Adrenal gland (tissue), 19 donors: ENCODE measurements at regions of chr11 and their contacts with region 1.

Region 1: GRCh38 chr11:112588252-112588694 is 327.6 kb upstream of the PLET1 start:
- DNase-seq: peak; percentile 56 to 92 (median 77)
- H3K4me3 ChIP-seq: no peak overlapping the region
- H3K27ac ChIP-seq: no peak overlapping the region
- H3K4me1 ChIP-seq: no peaks in the 10 kb centered on the region
- H3K27me3 ChIP-seq: no peaks in the 10 kb centered on the region
- CTCF ChIP-seq: peak; percentile 61 to 85 (median 72)
- POLR2A ChIP-seq: no peak

Region 2: DNA sequence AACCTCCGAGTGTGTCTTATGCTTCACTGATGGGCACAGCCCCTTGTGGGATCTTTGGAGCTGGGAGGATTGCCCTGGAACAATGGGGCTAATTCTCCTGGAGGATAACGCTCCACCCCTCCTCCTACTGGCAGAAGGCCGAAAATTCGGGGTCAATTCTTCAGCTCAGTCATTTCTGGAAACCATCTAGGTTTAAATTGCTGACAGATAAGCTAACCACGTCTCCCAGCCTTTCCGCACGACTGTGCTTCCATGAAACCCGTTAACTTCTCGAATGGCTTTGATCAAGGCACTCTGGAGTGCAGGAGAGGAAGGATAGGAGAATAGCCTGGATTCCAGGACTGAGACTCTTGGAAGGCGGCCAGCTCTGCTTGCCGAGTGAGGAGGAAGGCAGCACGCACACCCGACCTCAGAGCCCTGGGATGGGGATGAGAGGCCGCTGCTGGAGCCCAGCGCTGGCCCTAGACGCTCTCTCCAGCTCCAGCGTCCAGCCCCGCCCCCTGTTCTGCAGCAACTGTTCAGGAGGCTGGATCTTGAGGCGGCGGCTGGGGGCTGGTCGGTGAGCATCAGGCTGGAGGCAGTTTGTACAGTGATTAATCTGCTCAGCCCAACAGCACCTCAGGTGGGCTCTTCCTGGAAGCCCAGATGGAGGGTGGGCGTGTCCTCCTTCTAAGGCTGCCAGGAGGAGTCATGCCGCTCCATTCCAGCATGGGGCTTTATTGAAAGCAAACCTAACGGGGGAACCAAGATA is 196.2 kb after region 1 on chr11:
- intact Hi-C with region 1: loop called in 1 of 2 experiments (anchors 10 kb)
- DNase-seq: peak in 5 of 7 donors; percentile 56 to 71 (median 62)
- H3K4me3 ChIP-seq: peak overlapping the region in 1 of 4 donors; percentile 15
- H3K27ac ChIP-seq: no peak overlapping the region
- H3K4me1 ChIP-seq: peaks cover 0 to 15% of the 10 kb centered on the region in 2 donors
- H3K27me3 ChIP-seq: no peaks in the 10 kb centered on the region
- CTCF ChIP-seq: no peak
- POLR2A ChIP-seq: no peak

Region 3: DNA sequence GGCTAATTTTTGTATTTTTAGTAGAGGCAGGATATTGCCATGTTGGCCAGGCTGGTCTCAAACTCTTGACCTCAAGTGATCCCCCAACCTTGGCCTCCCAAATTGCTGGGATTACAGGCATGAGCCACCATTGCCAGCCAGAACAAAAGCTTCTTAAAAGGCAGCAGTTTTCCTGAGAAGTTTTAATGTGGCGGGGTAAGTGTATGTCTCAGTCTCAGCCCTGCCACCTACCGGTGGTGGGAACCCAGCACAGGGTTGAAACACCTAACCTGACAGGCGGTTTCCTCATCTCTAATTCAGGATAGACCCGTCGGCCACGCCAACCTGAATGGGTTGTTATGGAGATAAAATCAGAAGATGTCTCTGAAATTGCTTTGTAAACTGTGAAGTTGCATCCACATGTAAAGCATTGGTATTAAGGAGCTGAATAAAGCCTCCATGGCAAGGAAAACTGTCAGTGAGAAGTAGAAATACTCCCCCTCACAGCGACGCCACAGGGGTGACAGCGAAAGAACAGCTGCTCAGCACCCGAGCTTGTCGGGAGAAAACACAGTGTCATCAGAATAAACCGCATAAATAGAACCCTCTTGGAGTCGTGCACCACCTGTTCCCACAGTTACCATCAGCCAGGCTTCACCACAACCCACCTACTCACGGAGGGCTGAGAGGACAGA is 207.0 kb after region 1 on chr11:
- intact Hi-C with region 1: loop called in 1 of 2 experiments (anchors 5 kb)
- DNase-seq: peak in 5 of 7 donors; percentile 30 to 82 (median 57)
- H3K4me3 ChIP-seq: no peak overlapping the region
- H3K27ac ChIP-seq: no peak overlapping the region
- H3K4me1 ChIP-seq: no peaks in the 10 kb centered on the region
- H3K27me3 ChIP-seq: no peaks in the 10 kb centered on the region
- CTCF ChIP-seq: peak; percentile 38 to 61 (median 48)
- POLR2A ChIP-seq: no peak

Region 4: DNA sequence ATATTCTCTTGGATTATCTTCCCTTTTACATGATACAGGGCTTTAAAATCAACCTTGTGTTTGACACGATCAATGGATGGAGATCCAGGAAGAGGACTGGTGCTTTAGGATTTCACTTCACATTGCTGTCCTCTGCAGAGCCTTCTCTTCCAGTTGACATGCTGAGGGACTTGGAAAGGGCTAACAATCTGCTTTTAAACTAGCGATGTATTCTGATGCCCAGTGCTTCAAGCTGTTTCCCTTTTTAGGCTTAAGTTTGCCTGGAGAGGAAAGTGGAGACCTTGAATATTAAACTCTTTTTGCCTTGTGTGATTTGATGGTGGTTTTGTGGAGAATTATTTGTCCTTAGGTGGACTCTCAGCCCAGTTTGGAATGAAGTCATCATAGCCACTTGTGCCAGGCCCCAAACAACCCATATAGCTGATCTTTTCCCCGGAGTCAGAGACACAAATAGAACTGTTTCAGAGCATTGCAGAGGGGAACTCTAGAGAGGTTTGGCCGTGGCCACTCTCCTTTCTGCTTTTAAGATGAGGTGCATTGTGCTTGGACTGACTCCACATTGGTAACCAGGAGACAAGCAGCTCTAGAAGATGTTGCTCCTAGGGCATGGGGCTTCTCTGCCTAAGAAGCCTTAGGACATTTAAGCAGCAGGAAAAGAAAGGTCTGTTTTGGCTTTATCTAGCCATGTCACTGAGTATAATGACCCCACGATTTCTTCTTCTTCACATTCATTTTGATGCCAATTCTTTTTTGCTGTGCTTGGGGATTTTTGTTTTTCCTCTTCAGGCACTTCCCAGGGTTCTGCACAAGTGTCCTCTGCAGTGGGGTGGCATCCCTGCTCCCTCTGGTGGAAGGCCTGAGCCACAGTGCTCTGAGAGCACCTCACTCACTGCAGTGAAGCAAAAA is 525.8 kb after region 1 on chr11:
- intact Hi-C with region 1: loop called in 1 of 2 experiments (anchors 10 kb)
- DNase-seq: peak; percentile 63 to 87 (median 74)
- H3K4me3 ChIP-seq: no peak overlapping the region
- H3K27ac ChIP-seq: peak overlapping the region in 1 of 5 donors; percentile 1
- H3K4me1 ChIP-seq: peaks cover 16 to 49% of the 10 kb centered on the region in 2 donors
- H3K27me3 ChIP-seq: no peaks in the 10 kb centered on the region
- CTCF ChIP-seq: peak; percentile 40 to 89 (median 74)
- POLR2A ChIP-seq: no peak

Region 5: DNA sequence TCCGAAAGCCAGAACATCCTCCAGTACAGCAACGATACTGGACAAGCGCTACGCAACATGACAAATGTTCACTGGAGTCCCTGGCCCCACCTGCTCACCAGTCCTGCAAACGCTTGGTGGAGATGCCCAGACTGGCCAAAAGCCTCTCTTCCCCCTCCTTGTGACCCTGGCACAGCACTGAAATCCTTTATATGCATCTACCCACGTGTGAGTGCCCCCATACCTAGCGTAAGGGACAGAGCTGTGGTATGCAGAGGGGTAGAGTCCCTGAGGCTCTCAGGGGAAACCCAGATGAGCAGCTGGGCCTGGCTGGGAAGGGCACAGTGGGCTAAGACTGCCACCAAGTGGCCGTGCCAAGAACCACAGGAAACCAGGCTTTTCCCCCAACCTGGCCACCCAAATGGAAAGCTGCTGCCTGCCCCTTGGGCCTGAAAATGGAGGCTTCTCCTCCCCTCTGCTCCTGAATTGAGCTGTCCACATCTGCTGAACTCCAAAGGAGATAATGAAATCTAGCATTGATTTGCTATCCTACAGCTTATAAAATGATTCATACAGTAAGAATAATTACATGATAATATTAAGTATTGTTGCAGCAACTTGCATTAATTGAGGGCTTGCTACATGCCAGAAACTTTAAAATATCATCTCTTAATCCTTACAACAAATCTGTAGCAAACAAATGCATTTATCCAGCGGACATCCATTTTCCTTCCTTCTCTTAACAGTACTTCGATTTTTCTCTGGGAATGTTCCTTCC is 701.3 kb after region 1 on chr11:
- intact Hi-C with region 1: loop called (anchors 5 to 10 kb)
- DNase-seq: peak; percentile 48 to 84 (median 72)
- H3K4me3 ChIP-seq: no peak overlapping the region
- H3K27ac ChIP-seq: no peak overlapping the region
- H3K4me1 ChIP-seq: no peaks in the 10 kb centered on the region
- H3K27me3 ChIP-seq: no peaks in the 10 kb centered on the region
- CTCF ChIP-seq: peak; percentile 87 to 97 (median 94)
- POLR2A ChIP-seq: no peak